Heart left ventricle (tissue), 16 donors: ENCODE measurements at regions of chr10 and their contacts with region 1.

Region 1: DNA sequence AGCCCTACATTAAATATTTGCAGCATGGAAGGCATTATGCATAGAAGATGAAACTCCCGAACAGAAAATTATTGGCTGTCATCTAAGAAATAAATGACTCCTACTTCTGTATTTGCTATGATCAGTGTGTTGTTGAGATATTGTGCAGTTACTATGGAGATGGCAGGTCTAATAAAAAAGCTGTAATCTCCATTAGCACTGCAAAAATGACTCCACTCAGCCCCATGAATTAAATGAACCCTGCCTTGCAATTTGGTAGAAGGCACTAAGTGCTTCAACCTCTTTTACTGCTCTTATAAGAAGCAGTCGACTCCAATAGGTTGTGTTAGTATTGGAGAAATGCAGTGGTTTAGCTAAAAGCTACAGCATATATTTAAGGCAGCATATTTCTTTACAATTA is 290.0 kb upstream of the PHYHIPL start:
- DNase-seq: no peak
- ATAC-seq: no peak
- H3K4me3 ChIP-seq: no peak overlapping the region
- H3K27ac ChIP-seq: no peak overlapping the region
- H3K4me1 ChIP-seq: no peaks in the 10 kb centered on the region
- H3K27me3 ChIP-seq: no peaks in the 10 kb centered on the region
- CTCF ChIP-seq: no peak
- POLR2A ChIP-seq: no peak

Region 2: GRCh38 chr10:58593008-58593407 is 293.4 kb before region 1 on chr10:
- intact Hi-C with region 1: no loop called
- DNase-seq: no peak
- ATAC-seq: no peak
- H3K4me3 ChIP-seq: no peak overlapping the region
- H3K27ac ChIP-seq: no peak overlapping the region
- H3K4me1 ChIP-seq: peaks cover 0 to 23% (median 6%) of the 10 kb centered on the region in 12 donors
- H3K27me3 ChIP-seq: no peaks in the 10 kb centered on the region
- CTCF ChIP-seq: no peak
- POLR2A ChIP-seq: no peak

Region 3: GRCh38 chr10:58909881-58910280 is 23.5 kb after region 1 on chr10:
- intact Hi-C with region 1: loop called in 1 of 10 experiments (anchors 2 kb)
- DNase-seq: no peak
- ATAC-seq: no peak
- H3K4me3 ChIP-seq: no peak overlapping the region
- H3K27ac ChIP-seq: no peak overlapping the region
- H3K4me1 ChIP-seq: no peaks in the 10 kb centered on the region
- H3K27me3 ChIP-seq: no peaks in the 10 kb centered on the region
- CTCF ChIP-seq: no peak
- POLR2A ChIP-seq: no peak